MCF 10A (cell line): ENCODE measurements at regions of chr1 and their contacts with region 1.

Region 1: GRCh38 chr1:209435654-209436566 is 147.6 kb upstream of the CAMK1G start:
- DNase-seq: peak; percentile 97
- H3K4me3 Mint-ChIP-seq: no peak overlapping the region
- H3K27ac Mint-ChIP-seq: peak overlapping the region; percentile 90
- H3K4me1 Mint-ChIP-seq: peaks cover 51% of the 10 kb centered on the region
- H3K27me3 Mint-ChIP-seq: no peaks in the 10 kb centered on the region
- CTCF ChIP-seq: peak; percentile 100

Region 2: GRCh38 chr1:208874915-208875314 is 561.0 kb before region 1 on chr1:
- CTCF ChIA-PET with region 1: no interaction called
- POLR2A ChIA-PET with region 1: no interaction called
- intact Hi-C with region 1: no loop called
- DNase-seq: no peak
- H3K4me3 Mint-ChIP-seq: no peak overlapping the region
- H3K27ac Mint-ChIP-seq: no peak overlapping the region
- H3K4me1 Mint-ChIP-seq: peaks cover 6% of the 10 kb centered on the region
- H3K27me3 Mint-ChIP-seq: no peaks in the 10 kb centered on the region
- CTCF ChIP-seq: no peak

Region 3: DNA sequence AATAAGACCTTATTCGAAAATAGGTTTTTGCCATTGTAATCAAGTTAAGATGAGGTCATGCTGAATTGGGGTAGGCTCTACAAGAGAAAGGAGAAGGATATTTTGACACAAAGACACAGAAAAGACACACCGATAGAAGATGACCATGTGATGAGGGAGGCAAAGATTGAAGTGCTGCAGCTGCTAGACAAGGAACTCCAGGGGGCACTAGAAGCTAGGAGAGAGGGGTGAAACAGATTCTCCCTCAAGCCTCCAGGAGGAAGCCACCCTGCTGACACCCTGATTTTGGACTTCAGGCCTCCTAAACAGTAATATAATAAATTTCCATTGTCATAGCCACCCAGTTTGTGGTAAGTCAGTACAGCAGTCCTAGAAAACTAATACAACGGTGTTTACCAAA is 359.2 kb before region 1 on chr1:
- CTCF ChIA-PET with region 1: no interaction called
- POLR2A ChIA-PET with region 1: no interaction called
- intact Hi-C with region 1: loop called (anchors 1 kb)
- DNase-seq: peak; percentile 84
- H3K4me3 Mint-ChIP-seq: no peak overlapping the region
- H3K27ac Mint-ChIP-seq: no peak overlapping the region
- H3K4me1 Mint-ChIP-seq: peaks cover 15% of the 10 kb centered on the region
- H3K27me3 Mint-ChIP-seq: no peaks in the 10 kb centered on the region
- CTCF ChIP-seq: peak; percentile 68

Region 4: GRCh38 chr1:209335178-209335577 is 100.7 kb before region 1 on chr1:
- CTCF ChIA-PET with region 1: interaction called, 3 read pairs
- POLR2A ChIA-PET with region 1: interaction called, 3 read pairs
- intact Hi-C with region 1: loop called (anchors 1 kb)
- DNase-seq: peak; percentile 75
- H3K4me3 Mint-ChIP-seq: no peak overlapping the region
- H3K27ac Mint-ChIP-seq: no peak overlapping the region
- H3K4me1 Mint-ChIP-seq: peaks cover 5% of the 10 kb centered on the region
- H3K27me3 Mint-ChIP-seq: no peaks in the 10 kb centered on the region
- CTCF ChIP-seq: peak; percentile 96

Region 5: DNA sequence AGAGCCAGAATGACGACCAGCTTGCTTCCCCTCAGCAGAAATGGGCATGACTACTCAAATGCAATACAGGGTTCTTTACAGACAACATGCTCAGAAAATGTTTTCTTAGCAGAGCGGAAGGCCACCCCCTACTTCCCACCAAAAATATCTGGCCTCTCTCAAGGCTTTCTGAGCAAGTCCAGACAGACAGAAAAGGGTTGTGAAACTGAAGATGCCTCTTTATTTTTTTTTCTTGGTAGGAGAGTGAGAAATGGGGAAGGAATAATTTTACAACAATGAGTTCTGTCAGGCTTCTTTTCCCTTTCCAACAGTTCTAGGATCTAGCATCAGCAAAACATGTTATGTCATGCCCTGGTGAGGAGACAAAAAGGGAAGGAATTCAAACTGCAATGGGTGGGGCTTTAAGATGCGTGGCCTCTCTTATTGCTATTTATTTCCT is 24.4 kb before region 1 on chr1:
- CTCF ChIA-PET with region 1: interaction called, 368 read pairs
- POLR2A ChIA-PET with region 1: interaction called, 2,930 read pairs
- intact Hi-C with region 1: no loop called
- DNase-seq: peak; percentile 99
- H3K4me3 Mint-ChIP-seq: peak overlapping the region; percentile 44
- H3K27ac Mint-ChIP-seq: peak overlapping the region; percentile 89
- H3K4me1 Mint-ChIP-seq: peaks cover 70% of the 10 kb centered on the region
- H3K27me3 Mint-ChIP-seq: no peaks in the 10 kb centered on the region
- CTCF ChIP-seq: no peak

Region 6: DNA sequence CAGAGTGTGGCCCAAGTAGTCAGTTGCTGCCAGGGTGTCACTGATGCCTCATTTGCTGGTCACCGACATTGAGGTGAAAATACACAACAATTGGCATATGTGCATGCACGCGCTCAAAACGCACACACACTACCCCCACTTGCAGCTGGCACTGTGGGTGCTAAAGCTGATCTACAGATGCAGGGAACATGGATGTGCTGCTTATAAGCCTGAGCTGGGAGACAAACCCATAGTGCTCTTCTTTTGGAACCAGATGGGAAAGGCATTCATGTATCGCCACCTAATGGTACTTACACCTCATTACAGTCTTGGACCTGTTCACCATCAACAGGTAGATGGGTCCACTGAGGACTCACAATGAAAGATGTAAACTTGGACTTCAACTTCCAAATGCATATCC is 77.3 kb after region 1 on chr1:
- CTCF ChIA-PET with region 1: interaction called, 11 read pairs
- POLR2A ChIA-PET with region 1: interaction called, 9 read pairs
- intact Hi-C with region 1: no loop called
- DNase-seq: peak; percentile 84
- H3K4me3 Mint-ChIP-seq: no peak overlapping the region
- H3K27ac Mint-ChIP-seq: no peak overlapping the region
- H3K4me1 Mint-ChIP-seq: peaks cover 11% of the 10 kb centered on the region
- H3K27me3 Mint-ChIP-seq: no peaks in the 10 kb centered on the region
- CTCF ChIP-seq: peak; percentile 93